GM12878 (cell line): ENCODE measurements at regions of chr12 and their contacts with region 1.

Region 1: DNA sequence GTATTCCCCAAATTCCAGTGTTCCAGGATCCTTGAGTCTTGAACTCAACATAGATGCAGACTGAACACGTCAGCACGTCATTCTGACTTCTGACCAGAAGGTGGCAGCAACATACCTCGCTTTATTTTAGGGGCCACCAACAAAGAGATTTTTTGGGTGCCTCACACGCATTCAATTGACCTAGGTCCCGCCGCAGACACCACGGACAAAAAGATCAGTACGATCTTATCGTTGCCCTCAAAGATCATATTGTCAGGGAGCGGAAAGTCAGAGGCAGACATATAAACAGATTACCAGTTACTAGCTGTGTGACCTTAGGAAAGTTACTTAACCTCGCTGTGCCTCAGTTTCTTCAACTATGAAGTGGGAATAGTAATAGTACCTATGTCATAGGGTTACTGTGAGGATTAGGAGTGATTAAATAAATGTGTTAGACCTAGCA is 6.5 kb upstream of the PRPH start:
- DNase-seq: peak; percentile 19
- ATAC-seq: peak; percentile 80
- H3K4me3 ChIP-seq: no peak overlapping the region
- H3K27ac ChIP-seq: no peak overlapping the region
- H3K4me1 ChIP-seq: no peaks in the 10 kb centered on the region
- H3K27me3 ChIP-seq: peaks cover 0 to 2% of the 10 kb centered on the region in 2 experiments; a peak in 2 of 4 replicates
- CTCF ChIP-seq: peak; percentile 69 to 86 (median 84)
- EP300 ChIP-seq: no peak
- POLR2A ChIP-seq: no peak
- RAD21 ChIP-seq: peak; percentile 85

Region 2: GRCh38 chr12:49304161-49304560 is 15.7 kb after region 1 on chr12:
- CTCF ChIA-PET with region 1: interaction called, 19 read pairs
- POLR2A ChIA-PET with region 1: no interaction called
- RAD21 ChIA-PET with region 1: interaction called, 3 read pairs
- SMC1A ChIA-PET with region 1: interaction called, 5 read pairs
- in situ Hi-C with region 1: no loop called
- intact Hi-C with region 1: no loop called
- DNase-seq: no peak
- ATAC-seq: no peak
- H3K4me3 ChIP-seq: no peak overlapping the region
- H3K27ac ChIP-seq: no peak overlapping the region
- H3K4me1 ChIP-seq: no peaks in the 10 kb centered on the region
- H3K27me3 ChIP-seq: no peaks in the 10 kb centered on the region
- CTCF ChIP-seq: no peak
- EP300 ChIP-seq: no peak
- POLR2A ChIP-seq: no peak
- RAD21 ChIP-seq: no peak

Region 3: DNA sequence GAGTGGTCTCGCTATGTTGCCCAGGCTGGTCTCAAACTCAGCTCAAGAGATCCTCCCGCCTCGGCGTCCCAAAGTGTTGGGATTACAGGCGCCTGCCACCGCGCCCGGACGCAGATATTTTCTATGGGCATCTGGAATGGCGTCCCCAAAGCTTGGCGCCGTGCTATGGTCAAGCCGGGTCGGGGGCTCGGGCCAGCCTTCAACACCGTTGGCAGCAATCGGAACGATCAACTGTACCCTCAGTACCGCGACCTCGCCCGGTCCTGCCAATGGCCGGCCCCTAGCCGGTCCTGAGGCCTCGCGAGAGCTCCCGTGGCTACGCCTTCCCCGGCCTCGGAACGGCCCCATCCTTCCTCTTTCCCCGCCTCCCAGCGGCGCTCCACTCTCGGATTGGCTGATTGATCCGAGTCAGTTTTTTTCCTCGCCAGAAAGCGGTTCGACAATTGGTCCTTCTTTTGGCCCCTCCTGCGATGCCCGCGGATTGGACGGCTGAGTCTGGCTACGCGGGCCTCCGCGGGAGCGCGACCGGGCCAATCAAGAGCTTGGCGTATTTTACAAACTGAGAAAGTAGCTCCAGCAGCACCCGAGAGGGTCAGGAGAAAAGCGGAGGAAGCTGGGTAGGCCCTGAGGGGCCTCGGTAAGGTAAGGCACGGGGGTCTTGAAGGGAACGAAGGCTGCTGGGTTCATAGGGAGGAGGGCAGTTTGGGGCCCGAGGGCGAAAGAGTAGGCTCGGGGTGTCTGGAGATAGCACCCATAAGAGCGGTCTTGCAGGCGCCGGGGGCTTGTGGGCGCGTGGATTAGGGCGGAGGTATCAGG is 34.5 kb after region 1 on chr12 and contains the start of gene TROAP:
- CTCF ChIA-PET with region 1: interaction called, 16 read pairs
- POLR2A ChIA-PET with region 1: no interaction called
- RAD21 ChIA-PET with region 1: interaction called, 3 read pairs
- SMC1A ChIA-PET with region 1: interaction called, 10 read pairs
- in situ Hi-C with region 1: no loop called
- intact Hi-C with region 1: no loop called
- DNase-seq: peak; percentile 96
- ATAC-seq: peak; percentile 99
- H3K4me3 ChIP-seq: peak within 1 kb of the TSS; percentile 95
- H3K27ac ChIP-seq: peak within 1 kb of the TSS; percentile 87
- H3K4me1 ChIP-seq: peaks cover 9% of the 10 kb centered on the region
- H3K27me3 ChIP-seq: no peaks in the 10 kb centered on the region
- CTCF ChIP-seq: no peak
- EP300 ChIP-seq: no peak
- POLR2A ChIP-seq: peak; percentile 95
- RAD21 ChIP-seq: no peak
- polyA plus RNA-seq, gene TROAP: 26.8 to 46.9 TPM

Region 4: GRCh38 chr12:49336645-49337584 is 48.5 kb after region 1 on chr12 and contains the start of gene C1QL4:
- CTCF ChIA-PET with region 1: interaction called, 139 read pairs
- POLR2A ChIA-PET with region 1: interaction called, 3 read pairs
- RAD21 ChIA-PET with region 1: interaction called, 25 read pairs
- SMC1A ChIA-PET with region 1: interaction called, 22 read pairs
- in situ Hi-C with region 1: loop called (anchors 5 kb)
- intact Hi-C with region 1: loop called (anchors 1 kb)
- DNase-seq: no peak
- ATAC-seq: peak; percentile 79
- H3K4me3 ChIP-seq: peak within 1 kb of the TSS; percentile 48
- H3K27ac ChIP-seq: no peak within 1 kb of the TSS
- H3K4me1 ChIP-seq: no peaks in the 10 kb centered on the region
- H3K27me3 ChIP-seq: peaks cover 15 to 23% of the 10 kb centered on the region in 2 experiments
- CTCF ChIP-seq: peak; percentile 67 to 95 (median 74)
- EP300 ChIP-seq: no peak
- POLR2A ChIP-seq: peak; percentile 46; the same call in 1 of the 2 replicates
- RAD21 ChIP-seq: peak; percentile 51
- polyA plus RNA-seq, gene C1QL4: not detected

Region 5: GRCh38 chr12:49347384-49348237 is 59.2 kb after region 1 on chr12:
- CTCF ChIA-PET with region 1: interaction called, 231 read pairs
- POLR2A ChIA-PET with region 1: interaction called, 3 read pairs
- RAD21 ChIA-PET with region 1: interaction called, 54 read pairs
- SMC1A ChIA-PET with region 1: interaction called, 22 read pairs
- in situ Hi-C with region 1: no loop called
- intact Hi-C with region 1: loop called (anchors 1 kb)
- DNase-seq: no peak
- ATAC-seq: peak; percentile 88
- H3K4me3 ChIP-seq: peak overlapping the region; percentile 49
- H3K27ac ChIP-seq: no peak overlapping the region
- H3K4me1 ChIP-seq: peaks cover 34% of the 10 kb centered on the region
- H3K27me3 ChIP-seq: peaks cover 13 to 22% of the 10 kb centered on the region in 2 experiments
- CTCF ChIP-seq: peak; percentile 85 to 96 (median 86)
- EP300 ChIP-seq: no peak
- POLR2A ChIP-seq: no peak
- RAD21 ChIP-seq: peak; percentile 47